H1 (cell line): ENCODE measurements at regions of chr15 and their contacts with region 1.

Region 1: DNA sequence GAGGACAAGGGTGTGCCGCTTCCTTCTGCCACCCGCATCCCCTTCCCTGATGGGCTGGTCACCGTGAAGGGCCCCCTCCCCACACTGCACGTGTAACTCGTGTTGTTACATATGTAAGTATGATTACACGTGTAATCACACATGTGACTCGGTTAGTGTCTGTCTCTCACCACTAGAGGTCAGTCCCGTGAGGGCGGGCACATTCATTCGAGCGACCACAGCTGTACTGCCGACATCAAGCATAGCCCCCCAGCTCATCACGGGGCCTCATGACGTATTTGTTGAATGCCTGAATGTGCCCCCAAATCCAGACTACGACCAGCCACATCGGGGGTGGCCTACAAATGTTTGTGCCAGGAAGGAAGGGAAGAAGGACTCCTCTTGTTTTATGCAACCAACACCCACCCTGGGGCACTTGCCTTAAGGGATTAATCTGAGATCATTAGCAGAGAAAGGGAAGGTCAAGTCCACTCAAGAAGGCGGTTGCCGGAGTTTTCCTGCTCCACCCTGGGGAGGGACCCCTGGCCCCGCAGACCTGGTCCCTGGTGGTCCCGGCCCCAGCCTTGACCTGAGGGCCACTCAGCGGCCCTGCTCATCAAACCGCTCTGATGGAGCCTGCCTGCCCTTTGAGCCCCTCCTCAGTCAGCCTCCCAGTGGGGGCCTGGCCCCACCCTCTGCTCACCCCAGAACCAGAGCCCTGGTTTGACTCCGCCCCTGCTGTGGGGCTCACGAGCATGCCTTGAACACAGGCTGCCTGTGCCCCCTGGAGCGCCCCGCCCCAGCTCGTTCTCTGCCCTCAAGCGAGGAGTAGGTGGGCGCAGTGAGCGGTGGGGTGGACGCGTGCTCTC is 52.8 kb downstream of the RGMA start:
- DNase-seq: peak in 1 of 2 experiments; percentile 67
- H3K4me3 ChIP-seq: no peak overlapping the region
- H3K27ac ChIP-seq: no peak overlapping the region
- H3K4me1 ChIP-seq: no peaks in the 10 kb centered on the region; a peak in 2 of 7 replicates
- H3K27me3 ChIP-seq: peaks cover 0 to 2% (median 0%) of the 10 kb centered on the region in 4 experiments; a peak in 1 of 7 replicates
- CTCF ChIP-seq: peak; percentile 48 to 78 (median 76)
- EP300 ChIP-seq: no peak
- POLR2A ChIP-seq: no peak
- RAD21 ChIP-seq: peak; percentile 66 to 76

Region 2: DNA sequence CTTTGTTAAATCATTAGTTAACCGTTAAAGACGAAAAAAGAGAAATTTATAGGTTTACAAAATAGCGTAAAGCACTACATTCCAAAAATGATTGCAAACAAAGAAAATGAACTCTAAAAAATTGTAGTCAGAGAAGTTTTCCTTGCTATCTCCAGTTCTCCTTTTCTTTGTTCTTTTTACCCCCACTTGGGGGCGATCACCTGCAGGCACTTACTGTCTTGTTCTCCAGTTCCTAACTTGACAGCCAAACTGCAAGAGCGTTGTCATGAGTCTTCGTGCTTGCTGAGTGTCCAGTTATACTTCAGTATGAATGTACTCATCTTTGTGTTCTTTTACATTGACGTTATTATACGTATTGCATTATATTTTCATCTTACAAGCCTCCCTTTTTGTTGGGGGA is 81.6 kb before region 1 on chr15:
- CTCF ChIA-PET with region 1: no interaction called
- POLR2A ChIA-PET with region 1: no interaction called
- DNase-seq: no peak
- H3K4me3 ChIP-seq: no peak overlapping the region
- H3K27ac ChIP-seq: no peak overlapping the region
- H3K4me1 ChIP-seq: peaks cover 0 to 2% (median 0%) of the 10 kb centered on the region in 4 experiments; a peak in 2 of 7 replicates
- H3K27me3 ChIP-seq: no peaks in the 10 kb centered on the region
- CTCF ChIP-seq: peak; percentile 7 to 61 (median 36)
- EP300 ChIP-seq: no peak
- POLR2A ChIP-seq: no peak
- RAD21 ChIP-seq: peak in 1 of 2 experiments; percentile 15; a peak in 2 of 4 replicates

Region 3: DNA sequence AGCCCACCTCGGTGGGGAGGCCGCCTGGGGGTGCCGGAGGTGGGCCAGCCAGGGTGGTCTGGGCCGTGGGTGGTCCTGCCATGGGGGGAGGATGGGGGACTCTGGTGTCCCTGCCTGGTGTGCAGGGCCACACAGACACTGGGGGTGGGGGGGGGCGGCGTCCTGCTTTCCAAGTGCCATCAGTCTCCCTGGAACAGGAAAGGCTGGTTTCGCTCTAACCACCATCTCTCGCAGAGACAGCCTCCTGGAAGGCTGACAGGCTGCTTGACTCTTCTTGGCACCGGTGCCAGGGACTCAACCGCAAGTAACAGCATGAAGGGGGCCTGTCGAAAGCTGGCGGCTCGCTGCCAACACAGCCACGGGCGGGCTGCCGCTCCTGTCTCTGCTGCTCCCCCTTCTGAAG is 12.6 kb after region 1 on chr15:
- CTCF ChIA-PET with region 1: interaction called, 119 read pairs
- POLR2A ChIA-PET with region 1: no interaction called
- DNase-seq: no peak
- H3K4me3 ChIP-seq: no peak overlapping the region
- H3K27ac ChIP-seq: no peak overlapping the region
- H3K4me1 ChIP-seq: no peaks in the 10 kb centered on the region; a peak in 1 of 7 replicates
- H3K27me3 ChIP-seq: no peaks in the 10 kb centered on the region
- CTCF ChIP-seq: no peak
- EP300 ChIP-seq: no peak
- POLR2A ChIP-seq: no peak
- RAD21 ChIP-seq: no peak

Region 4: DNA sequence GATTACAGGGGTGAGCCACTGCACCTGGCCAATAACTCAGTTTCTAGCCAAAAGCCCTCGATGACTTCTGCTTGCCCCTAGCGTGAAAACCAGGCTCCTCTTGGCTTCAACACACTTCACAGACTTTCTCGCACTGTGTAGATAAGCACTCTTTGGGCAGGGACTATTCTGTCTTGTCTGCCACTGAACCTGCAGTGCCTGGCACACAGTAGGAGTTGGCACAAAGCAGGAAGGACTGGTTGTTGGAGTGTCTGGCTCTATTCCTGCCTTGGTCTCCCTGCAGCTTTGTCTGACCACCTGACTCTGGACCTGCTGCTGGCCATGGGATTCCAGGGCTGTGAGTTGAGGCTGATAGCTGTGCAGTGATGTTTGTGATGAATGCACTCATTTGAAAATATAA is 99.3 kb after region 1 on chr15:
- CTCF ChIA-PET with region 1: no interaction called
- POLR2A ChIA-PET with region 1: no interaction called
- DNase-seq: no peak
- H3K4me3 ChIP-seq: no peak overlapping the region
- H3K27ac ChIP-seq: no peak overlapping the region
- H3K4me1 ChIP-seq: peaks cover 7 to 13% (median 8%) of the 10 kb centered on the region in 4 experiments; a peak in 5 of 7 replicates
- H3K27me3 ChIP-seq: peaks cover 1 to 24% (median 14%) of the 10 kb centered on the region in 4 experiments; a peak in 6 of 7 replicates
- CTCF ChIP-seq: no peak
- EP300 ChIP-seq: no peak
- POLR2A ChIP-seq: no peak
- RAD21 ChIP-seq: no peak